Naive thymus-derived CD4-positive, alpha-beta T cell (primary cell): ENCODE measurements at regions of chr4 and their contacts with region 1.

Region 1: DNA sequence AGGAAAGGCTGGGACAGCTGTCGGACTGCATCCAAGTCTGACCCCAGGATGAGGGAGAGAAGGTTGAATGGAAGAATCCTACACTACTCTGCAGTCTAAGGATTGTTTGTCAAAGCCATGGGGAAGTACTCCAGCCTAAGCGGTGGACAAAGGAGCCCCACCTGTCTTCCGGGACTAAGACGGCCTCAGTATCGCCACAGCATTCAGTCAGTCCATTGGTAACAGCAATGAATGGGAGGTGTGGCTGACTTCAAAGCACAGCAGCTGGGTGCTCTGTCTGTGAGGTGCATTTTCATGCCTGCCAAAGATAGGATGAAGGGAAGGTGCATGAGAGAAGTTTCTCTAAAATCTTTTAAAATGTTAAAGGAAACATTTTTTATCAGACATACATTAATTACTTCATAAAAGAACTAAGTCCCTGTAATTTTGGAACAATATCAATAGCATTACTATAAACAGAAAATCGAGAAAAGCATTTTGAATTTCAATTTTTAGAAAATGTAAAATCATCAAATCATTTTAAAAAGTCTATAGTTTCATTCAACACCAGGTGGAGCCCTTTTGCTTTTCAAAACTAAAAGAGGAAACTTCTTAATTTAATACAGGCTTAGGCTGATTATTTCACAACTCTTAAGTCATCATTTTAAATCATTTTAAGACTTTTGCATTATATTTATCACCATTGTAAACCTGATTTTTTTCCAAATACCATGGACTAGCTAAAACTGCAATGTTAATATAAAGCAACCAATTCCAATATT is 27.6 kb upstream of the INTU start:
- DNase-seq: peak in 1 of 9 donors; percentile 1
- ATAC-seq: no peak
- H3K4me3 ChIP-seq: no peak overlapping the region
- H3K4me3 Mint-ChIP-seq: no peak overlapping the region
- H3K27ac ChIP-seq: no peak overlapping the region
- H3K27ac Mint-ChIP-seq: no peak overlapping the region
- H3K4me1 ChIP-seq: no peaks in the 10 kb centered on the region
- H3K4me1 Mint-ChIP-seq: no peaks in the 10 kb centered on the region
- H3K27me3 ChIP-seq: peaks cover 0 to 3% of the 10 kb centered on the region in 2 donors
- H3K27me3 Mint-ChIP-seq: peaks cover 5 to 21% (median 5%) of the 10 kb centered on the region in 5 donors

Region 2: DNA sequence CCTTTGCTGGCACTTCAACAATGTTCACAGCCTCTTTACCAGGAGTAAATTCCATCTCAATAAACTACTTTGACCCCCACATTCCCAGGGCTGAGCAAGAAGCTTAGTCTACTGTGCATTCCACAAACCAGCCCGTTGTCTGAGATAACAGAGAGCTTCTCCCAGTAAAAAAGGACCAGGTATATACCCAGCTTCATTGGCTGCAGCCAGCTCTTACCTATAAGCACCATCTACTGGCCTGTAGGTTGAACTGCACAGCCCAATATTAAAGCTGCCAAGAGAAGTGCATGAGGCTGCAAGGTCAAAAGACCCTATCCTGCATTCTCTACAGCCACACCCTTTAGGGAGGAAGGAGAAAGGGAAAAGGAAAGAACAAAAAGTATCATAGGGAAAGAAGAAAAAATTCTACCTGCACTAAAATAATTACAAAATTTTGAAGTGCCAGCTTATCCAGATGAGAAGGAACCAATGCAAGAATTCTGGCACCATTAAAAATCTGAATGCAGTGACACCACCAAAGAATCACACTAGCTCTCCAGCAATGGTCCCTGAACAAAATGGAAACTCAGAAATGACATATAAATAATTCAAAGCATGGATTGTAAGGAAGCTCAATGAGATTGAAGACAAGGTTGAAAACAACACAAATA is 18.1 kb before region 1 on chr4:
- CTCF ChIA-PET with region 1: no interaction called
- POLR2A ChIA-PET with region 1: no interaction called
- intact Hi-C with region 1: no loop called
- DNase-seq: peak in 1 of 9 donors; percentile 1
- ATAC-seq: peak; percentile 48
- H3K4me3 ChIP-seq: no peak overlapping the region
- H3K4me3 Mint-ChIP-seq: no peak overlapping the region
- H3K27ac ChIP-seq: no peak overlapping the region
- H3K27ac Mint-ChIP-seq: no peak overlapping the region
- H3K4me1 ChIP-seq: no peaks in the 10 kb centered on the region
- H3K4me1 Mint-ChIP-seq: no peaks in the 10 kb centered on the region
- H3K27me3 ChIP-seq: no peaks in the 10 kb centered on the region
- H3K27me3 Mint-ChIP-seq: peaks cover 0 to 13% (median 2%) of the 10 kb centered on the region in 5 donors

Region 3: GRCh38 chr4:127732613-127733328 is 127.6 kb after region 1 on chr4:
- CTCF ChIA-PET with region 1: no interaction called
- POLR2A ChIA-PET with region 1: no interaction called
- intact Hi-C with region 1: loop called in 1 of 2 experiments (anchors 1 kb)
- DNase-seq: peak in 1 of 9 donors; percentile 13
- ATAC-seq: peak; percentile 22
- H3K4me3 ChIP-seq: no peak overlapping the region
- H3K4me3 Mint-ChIP-seq: no peak overlapping the region
- H3K27ac ChIP-seq: no peak overlapping the region
- H3K27ac Mint-ChIP-seq: no peak overlapping the region
- H3K4me1 ChIP-seq: no peaks in the 10 kb centered on the region
- H3K4me1 Mint-ChIP-seq: no peaks in the 10 kb centered on the region
- H3K27me3 ChIP-seq: peaks cover 0 to 4% of the 10 kb centered on the region in 2 donors
- H3K27me3 Mint-ChIP-seq: peaks cover 0 to 7% (median 3%) of the 10 kb centered on the region in 5 donors

Region 4: GRCh38 chr4:127985995-127986394 is 380.9 kb after region 1 on chr4:
- CTCF ChIA-PET with region 1: no interaction called
- POLR2A ChIA-PET with region 1: no interaction called
- intact Hi-C with region 1: loop called in 1 of 2 experiments (anchors 5 kb)
- DNase-seq: no peak
- ATAC-seq: no peak
- H3K4me3 ChIP-seq: no peak overlapping the region
- H3K4me3 Mint-ChIP-seq: no peak overlapping the region
- H3K27ac ChIP-seq: no peak overlapping the region
- H3K27ac Mint-ChIP-seq: peak overlapping the region in 2 of 9 donors; percentile 61 to 80
- H3K4me1 ChIP-seq: no peaks in the 10 kb centered on the region
- H3K4me1 Mint-ChIP-seq: peaks cover 0 to 9% (median 0%) of the 10 kb centered on the region in 7 donors
- H3K27me3 ChIP-seq: no peaks in the 10 kb centered on the region
- H3K27me3 Mint-ChIP-seq: no peaks in the 10 kb centered on the region

Region 5: DNA sequence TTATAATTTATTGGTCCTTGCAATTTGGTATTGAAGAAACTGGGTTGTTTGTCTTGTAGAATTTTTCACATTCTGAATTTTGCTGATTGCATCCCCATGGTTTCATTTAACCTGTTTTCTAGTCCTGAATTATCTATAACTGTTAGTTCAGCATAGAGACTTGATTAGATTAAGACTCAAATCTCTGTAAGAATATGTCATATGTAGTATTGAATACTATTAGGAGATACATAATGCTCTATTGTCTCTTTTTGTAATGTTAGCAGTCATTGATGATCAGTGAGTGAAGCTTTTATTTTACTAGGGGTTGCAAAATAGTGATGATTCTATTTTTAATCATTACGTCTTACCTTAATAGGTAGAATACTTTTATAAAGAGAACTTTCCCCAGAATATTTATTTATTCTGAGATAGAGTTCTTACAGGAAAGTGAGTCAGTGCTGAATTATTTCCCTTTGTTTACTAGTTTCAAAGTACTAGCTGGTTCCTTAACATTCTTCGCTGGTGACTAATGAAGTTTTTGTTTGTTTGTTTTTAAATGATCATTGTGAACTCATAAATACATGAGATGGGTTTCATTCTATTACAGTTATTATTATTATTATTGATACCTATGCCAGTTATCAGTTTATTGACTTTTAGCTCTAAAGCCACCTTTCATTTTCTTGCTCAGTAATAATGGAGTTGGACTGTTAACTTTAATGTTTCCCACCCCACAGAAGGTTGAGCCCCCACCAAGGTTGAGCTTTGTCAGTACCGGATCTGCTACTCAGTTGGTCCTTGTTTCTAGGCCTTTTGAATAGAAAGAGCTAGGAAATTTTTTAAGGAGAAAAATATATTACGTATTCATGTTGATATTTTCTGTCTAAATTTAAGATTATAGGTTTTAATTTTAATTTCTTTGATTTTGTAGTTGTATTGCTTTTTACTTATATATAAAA is 558.3 kb after region 1 on chr4:
- CTCF ChIA-PET with region 1: no interaction called
- POLR2A ChIA-PET with region 1: no interaction called
- intact Hi-C with region 1: loop called in 1 of 2 experiments (anchors 5 kb)
- DNase-seq: no peak
- ATAC-seq: no peak
- H3K4me3 ChIP-seq: no peak overlapping the region
- H3K4me3 Mint-ChIP-seq: no peak overlapping the region
- H3K27ac ChIP-seq: no peak overlapping the region
- H3K27ac Mint-ChIP-seq: no peak overlapping the region
- H3K4me1 ChIP-seq: no peaks in the 10 kb centered on the region
- H3K4me1 Mint-ChIP-seq: no peaks in the 10 kb centered on the region
- H3K27me3 ChIP-seq: no peaks in the 10 kb centered on the region
- H3K27me3 Mint-ChIP-seq: no peaks in the 10 kb centered on the region